ENCODE measurements at regions of chr7 and their contacts with region 1.

Region 1: DNA sequence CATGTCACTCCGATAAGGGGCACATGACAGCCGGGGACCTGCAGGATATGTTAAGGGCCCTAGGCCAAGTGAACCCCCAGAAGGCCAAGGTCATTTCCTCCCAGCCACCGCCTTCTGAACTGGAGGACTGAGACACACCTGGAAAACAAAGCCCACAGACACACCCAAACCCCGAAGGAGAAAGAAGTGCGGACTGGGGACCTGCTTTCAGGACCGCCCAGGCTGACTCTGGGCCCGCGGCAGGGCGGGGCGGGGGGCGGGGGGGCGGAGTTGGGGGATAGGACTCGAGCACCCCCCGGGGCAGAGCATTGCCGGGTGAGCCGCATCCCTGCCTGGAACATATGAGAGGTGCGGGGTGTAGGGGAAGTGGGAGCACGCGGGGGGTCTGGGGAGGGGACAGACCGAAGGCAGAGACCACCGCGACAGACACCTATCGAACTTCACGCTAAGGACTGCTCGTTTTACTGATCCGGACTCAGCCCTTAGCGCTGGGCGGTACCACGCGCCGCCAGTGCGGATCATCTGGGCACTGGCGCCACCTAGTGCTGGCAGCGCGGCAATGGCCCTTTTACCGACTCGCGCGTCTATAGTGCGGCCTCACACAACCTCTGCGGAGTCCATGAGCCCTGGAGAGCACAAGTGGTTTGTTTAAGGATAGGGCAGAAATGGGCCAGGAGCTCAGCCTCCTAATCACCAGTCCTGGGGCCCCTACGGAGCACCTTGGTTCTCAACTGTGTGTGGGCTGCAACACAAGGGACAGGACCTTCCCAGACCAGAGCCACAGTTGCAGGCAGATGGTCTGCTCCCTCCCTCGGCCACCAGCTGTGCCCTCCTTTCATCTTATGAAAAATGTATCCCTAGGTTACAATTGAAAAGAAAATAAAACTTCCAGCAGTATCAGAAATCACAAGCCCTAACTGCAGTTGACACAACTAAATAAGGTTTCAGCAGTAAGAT is 157.6 kb downstream of the HERPUD2 start:
- DNase-seq: peak; percentile 73 to 87
- H3K4me3 ChIP-seq: peak overlapping the region; percentile 39
- H3K4me3 Mint-ChIP-seq: peak overlapping the region; percentile 67
- H3K27ac Mint-ChIP-seq: no peak overlapping the region
- H3K4me1 ChIP-seq: no peaks in the 10 kb centered on the region; the same call in 1 of the 2 replicates
- H3K4me1 Mint-ChIP-seq: no peaks in the 10 kb centered on the region
- H3K27me3 ChIP-seq: 0 out of 2 replicates have a peak, but pooled peaks cover 2% of the 10 kb centered on the region
- H3K27me3 Mint-ChIP-seq: peaks cover 22% of the 10 kb centered on the region
- CTCF ChIP-seq: peak; percentile 93 to 95

Region 2: DNA sequence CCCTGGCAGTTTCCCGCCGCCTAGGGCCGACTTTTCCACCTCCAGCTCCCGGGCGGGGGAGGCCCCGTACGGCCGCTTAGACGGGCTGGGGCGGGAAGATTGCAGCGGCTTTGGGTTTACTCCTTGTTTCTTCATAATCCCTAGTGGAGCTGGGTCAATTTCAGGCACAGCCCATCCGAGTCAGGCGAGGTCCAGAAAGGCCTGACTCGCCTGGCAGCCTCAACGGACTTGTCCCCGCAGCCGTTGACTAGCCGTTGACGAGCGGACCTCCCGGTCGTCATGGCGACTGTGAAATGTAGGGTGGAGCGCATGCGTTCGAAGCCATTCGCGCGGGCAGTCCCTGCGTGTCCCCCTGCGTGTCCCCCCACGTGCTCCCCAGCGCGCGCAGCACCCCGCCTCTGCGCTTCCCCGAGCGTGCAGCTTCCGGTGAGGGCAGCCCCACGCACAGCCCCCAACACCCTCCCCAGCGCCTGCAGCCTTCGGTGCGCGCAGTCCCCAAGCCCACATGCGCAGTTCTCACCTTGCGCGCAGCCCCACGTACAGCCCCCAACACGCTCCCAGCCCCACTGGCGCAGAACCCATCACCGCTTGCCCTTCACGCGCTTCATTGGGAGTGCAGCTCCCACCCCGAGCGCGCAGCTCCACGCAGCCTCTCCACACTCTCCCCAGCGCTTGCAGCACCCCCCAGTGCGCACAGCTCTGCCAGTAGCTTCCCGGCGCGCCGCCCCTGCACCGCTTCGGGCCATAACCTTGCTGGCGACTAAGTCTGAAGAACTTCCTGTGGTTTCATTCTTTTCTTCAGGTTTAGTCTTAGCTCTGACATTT is 351.2 kb before region 1 on chr7:
- CTCF ChIA-PET with region 1: no interaction called
- POLR2A ChIA-PET with region 1: no interaction called
- intact Hi-C with region 1: loop called (anchors 5 kb)
- DNase-seq: no peak
- H3K4me3 ChIP-seq: no peak overlapping the region
- H3K4me3 Mint-ChIP-seq: no peak overlapping the region
- H3K27ac Mint-ChIP-seq: no peak overlapping the region
- H3K4me1 ChIP-seq: no peaks in the 10 kb centered on the region
- H3K4me1 Mint-ChIP-seq: no peaks in the 10 kb centered on the region
- H3K27me3 ChIP-seq: no peaks in the 10 kb centered on the region
- H3K27me3 Mint-ChIP-seq: peaks cover 10% of the 10 kb centered on the region
- CTCF ChIP-seq: no peak

Region 3: GRCh38 chr7:35424869-35425495 is 112.4 kb before region 1 on chr7:
- CTCF ChIA-PET with region 1: interaction called, 5 read pairs
- POLR2A ChIA-PET with region 1: no interaction called
- intact Hi-C with region 1: loop called (anchors 1 kb)
- DNase-seq: peak; percentile 53 to 71
- H3K4me3 ChIP-seq: no peak overlapping the region
- H3K4me3 Mint-ChIP-seq: no peak overlapping the region
- H3K27ac Mint-ChIP-seq: no peak overlapping the region
- H3K4me1 ChIP-seq: no peaks in the 10 kb centered on the region
- H3K4me1 Mint-ChIP-seq: no peaks in the 10 kb centered on the region
- H3K27me3 ChIP-seq: no peaks in the 10 kb centered on the region
- H3K27me3 Mint-ChIP-seq: peaks cover 12% of the 10 kb centered on the region
- CTCF ChIP-seq: peak; percentile 79 to 87